Gastrocnemius medialis (tissue), 4 donors: ENCODE measurements at regions of chr17 and their contacts with region 1.

Region 1: DNA sequence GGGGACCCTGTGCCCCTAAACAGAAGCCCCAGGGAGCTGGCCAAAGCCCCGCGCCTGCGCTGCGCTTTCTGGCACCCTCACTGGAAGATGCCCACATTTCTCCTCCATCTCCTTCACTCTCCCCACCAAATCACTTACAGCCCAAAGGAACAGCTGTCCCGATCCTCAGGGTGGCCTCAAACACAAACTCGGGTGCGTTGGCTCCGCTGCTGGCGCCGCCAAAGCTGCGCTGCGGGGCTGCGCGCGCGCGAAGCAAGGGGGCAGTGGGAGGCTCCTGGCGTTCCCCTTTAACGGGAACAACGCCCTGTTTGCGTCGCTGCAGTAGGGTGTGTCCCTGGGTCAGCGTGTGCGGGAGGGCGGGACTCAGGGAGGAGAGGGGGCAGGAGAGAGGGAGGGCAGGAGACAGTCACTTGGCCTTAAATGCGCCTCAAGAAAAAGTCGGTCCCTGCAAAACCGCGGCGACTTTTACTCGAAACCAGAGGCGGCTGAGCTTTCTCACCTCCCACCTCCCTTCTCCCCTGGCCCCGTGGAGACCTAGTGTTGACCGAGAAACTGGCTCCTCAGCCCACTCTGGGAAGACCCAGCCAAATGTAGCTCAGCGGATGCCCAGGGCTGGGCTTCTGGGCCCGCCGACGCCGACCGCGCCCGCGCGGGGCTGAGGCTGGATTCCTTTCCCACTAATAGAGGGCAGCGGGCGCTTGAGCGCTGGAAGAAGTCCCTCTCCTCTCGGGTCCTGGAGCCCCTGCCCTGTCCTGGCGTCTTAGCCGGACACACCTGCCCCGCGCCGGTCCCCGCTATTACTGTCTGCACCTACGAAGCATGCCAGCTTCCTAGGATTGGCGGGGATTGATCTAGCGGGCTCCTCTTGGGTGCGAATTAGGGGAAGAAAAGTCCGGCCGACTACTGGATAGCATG is 2.6 kb downstream of the PMP22 start:
- DNase-seq: peak; percentile 94 to 95
- ATAC-seq: peak; percentile 61 to 76
- H3K4me3 ChIP-seq: peak overlapping the region; percentile 78 to 97 (median 85)
- H3K27ac ChIP-seq: peak overlapping the region; percentile 94 to 98 (median 96)
- H3K4me1 ChIP-seq: peaks cover 37 to 39% of the 10 kb centered on the region in 2 donors
- H3K27me3 ChIP-seq: no peaks in the 10 kb centered on the region
- CTCF ChIP-seq: peak in 3 of 5 experiments; percentile 40 to 43 (median 42)
- POLR2A ChIP-seq: peak; percentile 95 to 97

Region 2: DNA sequence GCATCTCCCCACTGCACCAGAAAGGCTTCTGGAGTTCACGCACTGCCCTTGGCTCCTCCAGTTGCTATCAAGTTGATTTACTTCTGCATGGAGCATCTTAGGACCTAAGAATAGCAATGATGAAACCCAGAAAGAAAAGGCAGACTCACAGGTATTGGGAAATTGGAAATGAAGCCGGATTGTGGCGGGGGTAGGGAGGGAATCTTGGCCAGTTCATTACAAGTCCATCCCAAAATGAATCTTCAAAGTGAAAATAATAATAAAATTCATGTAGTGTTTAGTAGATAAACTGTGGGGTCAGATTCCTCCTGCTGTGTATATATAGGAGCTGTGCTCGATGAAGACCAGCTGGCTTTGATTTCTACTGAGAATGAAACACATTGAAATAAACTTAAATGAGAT is 45.2 kb after region 1 on chr17:
- in situ Hi-C with region 1: no loop called
- intact Hi-C with region 1: loop called (anchors 2 kb)
- DNase-seq: peak in 1 of 2 donors; percentile 71
- ATAC-seq: peak; percentile 95 to 97
- H3K4me3 ChIP-seq: no peak overlapping the region
- H3K27ac ChIP-seq: peak overlapping the region in 2 of 4 donors; percentile 17 to 73
- H3K4me1 ChIP-seq: peaks cover 25 to 29% of the 10 kb centered on the region in 2 donors
- H3K27me3 ChIP-seq: no peaks in the 10 kb centered on the region
- CTCF ChIP-seq: no peak
- POLR2A ChIP-seq: no peak

Region 3: GRCh38 chr17:15351925-15352324 is 89.4 kb after region 1 on chr17:
- in situ Hi-C with region 1: no loop called
- intact Hi-C with region 1: loop called (anchors 2 kb)
- DNase-seq: peak; percentile 53 to 70
- ATAC-seq: peak; percentile 100
- H3K4me3 ChIP-seq: no peak overlapping the region
- H3K27ac ChIP-seq: peak overlapping the region; percentile 45 to 61 (median 58)
- H3K4me1 ChIP-seq: peaks cover 0 to 15% of the 10 kb centered on the region in 2 donors
- H3K27me3 ChIP-seq: no peaks in the 10 kb centered on the region
- CTCF ChIP-seq: no peak
- POLR2A ChIP-seq: no peak

Region 4: GRCh38 chr17:15432807-15433600 is 170.5 kb after region 1 on chr17:
- in situ Hi-C with region 1: no loop called
- intact Hi-C with region 1: loop called (anchors 1 kb)
- DNase-seq: peak in 1 of 2 donors; percentile 37
- ATAC-seq: no peak
- H3K4me3 ChIP-seq: no peak overlapping the region
- H3K27ac ChIP-seq: peak overlapping the region; percentile 86 to 94 (median 89)
- H3K4me1 ChIP-seq: peaks cover 62 to 67% of the 10 kb centered on the region in 2 donors
- H3K27me3 ChIP-seq: no peaks in the 10 kb centered on the region
- CTCF ChIP-seq: no peak
- POLR2A ChIP-seq: no peak

Region 5: GRCh38 chr17:15456972-15457722 is 194.6 kb after region 1 on chr17:
- in situ Hi-C with region 1: no loop called
- intact Hi-C with region 1: loop called (anchors 1 kb)
- DNase-seq: peak; percentile 86 to 95
- ATAC-seq: peak; percentile 81 to 82
- H3K4me3 ChIP-seq: peak overlapping the region in 3 of 4 donors; percentile 10 to 26 (median 10)
- H3K27ac ChIP-seq: peak overlapping the region; percentile 90 to 92 (median 90)
- H3K4me1 ChIP-seq: peaks cover 25 to 35% of the 10 kb centered on the region in 2 donors
- H3K27me3 ChIP-seq: no peaks in the 10 kb centered on the region
- CTCF ChIP-seq: peak; percentile 35 to 54 (median 49)
- POLR2A ChIP-seq: no peak